GM10248 (cell line): ENCODE measurements at regions of chr1 and their contacts with region 1.

Region 1: DNA sequence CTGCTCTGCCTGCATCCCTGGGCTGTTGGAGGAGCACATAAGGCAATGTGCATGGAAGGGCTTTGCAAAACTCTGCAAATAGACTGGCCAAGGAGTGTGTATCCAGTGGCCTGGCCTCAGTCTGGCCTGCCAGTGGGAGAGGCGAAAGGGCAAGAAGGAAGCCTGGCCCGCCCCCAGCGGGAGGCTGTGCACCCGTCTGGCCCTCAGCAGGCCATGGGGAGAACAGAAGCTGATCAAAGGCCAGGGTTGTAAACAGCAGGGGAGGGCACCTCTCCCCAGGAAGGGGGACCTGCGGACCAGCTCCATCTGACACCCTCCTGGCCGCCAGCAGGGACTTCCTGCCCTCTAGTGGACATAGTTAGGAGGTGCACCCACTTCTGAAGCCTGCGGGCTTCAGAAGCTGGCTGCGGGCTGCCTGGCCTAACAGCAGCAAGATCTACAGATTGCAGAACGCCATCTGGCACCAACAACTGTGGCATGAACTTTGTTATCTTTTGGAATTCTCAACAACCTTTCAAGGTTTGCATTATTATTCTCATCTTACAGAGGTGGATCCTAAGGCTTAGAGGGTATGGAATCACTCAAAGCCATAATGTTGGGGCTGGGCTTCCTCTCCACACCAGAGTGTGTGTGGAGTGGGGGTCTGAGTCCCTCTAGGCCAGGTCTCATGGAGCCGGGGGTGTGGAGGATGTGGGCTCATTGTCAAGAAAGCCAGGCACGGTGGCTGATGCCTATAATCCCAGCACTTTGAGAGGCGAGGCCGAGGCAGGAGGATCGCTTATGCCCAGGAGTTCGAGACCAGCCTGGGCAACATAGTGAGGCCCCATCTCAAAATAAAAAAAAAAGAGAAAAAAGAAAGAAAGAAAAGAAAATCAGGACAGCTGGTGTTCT is 18.9 kb upstream of the CDK18 start:
- DNase-seq: peak; percentile 87
- CTCF ChIP-seq: peak; percentile 90

Region 2: DNA sequence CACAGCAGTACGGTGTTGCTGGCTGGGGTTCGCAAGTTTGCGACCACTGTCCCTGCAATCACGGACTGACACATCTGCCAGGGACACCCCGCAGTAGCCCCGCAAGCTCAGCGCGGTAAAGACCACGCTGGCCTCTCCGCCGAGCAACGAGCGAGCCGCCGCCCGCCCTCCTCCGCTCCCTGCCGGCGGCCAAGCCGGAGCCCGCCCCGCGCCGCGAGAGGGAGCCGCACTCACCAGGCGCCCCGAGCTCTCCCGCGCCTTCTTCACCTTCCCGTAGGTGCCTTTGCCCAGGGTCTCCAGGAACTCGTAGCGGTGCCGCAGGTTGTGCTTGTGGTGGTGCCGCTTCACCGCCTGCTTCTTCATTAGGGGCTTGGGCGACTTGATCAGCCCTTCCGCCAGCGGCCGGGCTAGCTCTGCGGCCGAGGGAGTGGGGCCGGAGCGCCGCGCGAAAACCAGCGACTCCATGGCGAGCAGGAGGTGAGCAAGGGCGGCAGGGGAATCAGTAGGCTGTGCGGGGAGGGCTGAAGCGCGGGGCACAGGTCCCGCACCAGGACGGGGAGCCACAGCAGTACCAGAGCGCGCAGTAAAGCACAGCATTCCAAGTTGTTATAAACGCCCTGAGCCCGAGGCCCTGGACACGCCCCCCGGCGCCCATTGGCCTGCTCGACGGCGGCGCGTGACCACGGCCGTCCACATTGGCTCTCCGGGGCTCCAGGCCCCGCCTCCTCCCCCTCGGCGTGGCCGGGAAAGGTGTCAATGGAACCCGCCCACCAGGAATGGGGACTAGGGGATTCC is 164.2 kb before region 1 on chr1 and contains the start of gene NUAK2:
- CTCF ChIA-PET with region 1: interaction called, 16 read pairs
- POLR2A ChIA-PET with region 1: no interaction called
- DNase-seq: peak; percentile 70
- CTCF ChIP-seq: peak; percentile 55

Region 3: DNA sequence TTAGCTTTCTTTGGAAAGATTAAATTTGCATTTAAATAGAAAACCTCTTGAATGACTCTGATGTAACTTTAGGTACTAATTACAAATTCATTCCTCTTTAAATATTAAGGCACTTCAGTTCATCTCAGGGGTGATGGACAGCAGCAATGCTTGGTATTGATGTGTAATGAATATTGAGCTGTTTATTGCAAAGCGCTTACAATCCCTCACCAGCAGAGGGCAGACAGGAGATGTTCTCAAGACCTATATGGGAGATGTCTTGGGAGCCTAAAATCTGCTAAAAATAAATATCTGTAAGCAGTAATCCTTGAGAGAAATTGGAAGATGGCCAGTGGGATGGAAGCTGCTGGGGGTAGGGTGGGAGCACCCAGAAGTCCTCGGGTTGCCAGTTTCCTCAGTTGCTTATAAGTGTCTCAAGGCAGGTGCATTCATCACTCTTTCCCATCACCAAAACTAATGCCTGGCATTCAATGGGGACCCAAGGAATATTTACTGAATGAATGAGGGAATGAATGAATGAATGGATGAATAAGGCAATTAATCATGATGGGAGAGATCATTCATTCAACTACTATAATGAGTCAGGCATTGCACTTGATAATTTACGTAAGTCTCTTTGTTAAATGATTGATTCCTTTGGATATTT is 131.2 kb before region 1 on chr1:
- CTCF ChIA-PET with region 1: interaction called, 68 read pairs
- POLR2A ChIA-PET with region 1: no interaction called
- DNase-seq: peak; percentile 60
- CTCF ChIP-seq: peak; percentile 87

Region 4: GRCh38 chr1:205396967-205397616 is 88.5 kb before region 1 on chr1:
- CTCF ChIA-PET with region 1: interaction called, 58 read pairs
- POLR2A ChIA-PET with region 1: no interaction called
- DNase-seq: peak; percentile 40
- CTCF ChIP-seq: peak; percentile 60

Region 5: DNA sequence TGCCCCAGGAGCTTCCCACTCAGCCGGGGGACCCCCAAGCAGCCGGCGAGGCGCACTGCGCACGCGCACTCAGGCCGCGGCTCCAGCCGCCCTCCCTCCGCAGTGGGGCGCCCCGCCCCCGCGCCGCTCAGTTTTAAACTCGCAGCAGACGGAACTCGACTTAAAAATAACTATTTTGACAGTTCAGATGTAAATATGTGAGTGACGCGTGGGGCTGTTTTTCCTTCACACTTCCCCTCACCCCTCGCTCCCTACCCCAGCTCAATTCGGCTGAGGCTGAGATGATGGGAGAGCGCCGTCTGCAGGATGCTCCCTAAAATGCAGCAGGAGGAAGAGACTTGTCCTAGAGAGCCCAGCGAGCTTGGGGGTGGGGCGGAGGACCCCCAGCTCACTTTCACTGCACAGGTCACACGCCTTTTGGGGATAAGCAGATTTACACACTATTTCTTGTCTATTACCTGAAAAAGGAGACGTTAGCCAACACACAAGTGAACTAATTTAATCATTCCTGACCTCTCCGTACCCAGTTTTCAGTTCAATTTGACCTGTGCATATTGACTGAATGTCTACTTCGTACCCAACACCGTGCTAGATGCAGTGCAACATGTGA is 54.8 kb before region 1 on chr1:
- CTCF ChIA-PET with region 1: interaction called, 17 read pairs
- POLR2A ChIA-PET with region 1: no interaction called
- DNase-seq: peak; percentile 70
- CTCF ChIP-seq: peak; percentile 78

Region 6: DNA sequence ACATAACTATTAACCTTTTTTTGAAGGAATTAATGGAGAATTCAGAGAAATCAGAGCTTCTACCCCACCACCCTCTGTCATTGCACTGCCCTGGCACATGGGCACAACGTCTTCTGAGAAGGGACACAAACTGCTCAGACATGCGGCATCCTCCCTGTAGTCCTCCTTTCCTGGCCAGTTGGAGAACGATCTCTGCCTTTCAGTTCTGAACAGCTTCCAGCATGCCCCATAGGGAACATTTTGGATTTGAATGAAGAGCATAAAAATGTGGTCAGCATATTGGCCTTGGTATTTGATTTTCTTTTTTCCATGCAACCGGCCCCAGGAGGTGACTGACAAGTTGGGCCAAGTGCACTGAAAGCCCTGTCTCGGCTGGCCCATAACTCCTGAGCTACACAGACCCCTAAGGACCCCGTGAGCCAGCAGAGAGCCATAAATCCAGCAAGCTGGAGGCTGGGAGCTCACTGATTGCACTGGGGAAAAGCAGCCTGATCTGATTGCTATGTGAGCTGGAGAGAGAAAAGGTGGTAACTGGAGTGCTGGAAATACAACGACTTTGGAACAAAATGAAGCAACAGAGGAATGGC is 18.9 kb before region 1 on chr1:
- CTCF ChIA-PET with region 1: interaction called, 15 read pairs
- POLR2A ChIA-PET with region 1: no interaction called
- DNase-seq: no peak
- CTCF ChIP-seq: no peak